SK-N-SH (cell line): ENCODE measurements at regions of chr17 and their contacts with region 1.

Region 1: DNA sequence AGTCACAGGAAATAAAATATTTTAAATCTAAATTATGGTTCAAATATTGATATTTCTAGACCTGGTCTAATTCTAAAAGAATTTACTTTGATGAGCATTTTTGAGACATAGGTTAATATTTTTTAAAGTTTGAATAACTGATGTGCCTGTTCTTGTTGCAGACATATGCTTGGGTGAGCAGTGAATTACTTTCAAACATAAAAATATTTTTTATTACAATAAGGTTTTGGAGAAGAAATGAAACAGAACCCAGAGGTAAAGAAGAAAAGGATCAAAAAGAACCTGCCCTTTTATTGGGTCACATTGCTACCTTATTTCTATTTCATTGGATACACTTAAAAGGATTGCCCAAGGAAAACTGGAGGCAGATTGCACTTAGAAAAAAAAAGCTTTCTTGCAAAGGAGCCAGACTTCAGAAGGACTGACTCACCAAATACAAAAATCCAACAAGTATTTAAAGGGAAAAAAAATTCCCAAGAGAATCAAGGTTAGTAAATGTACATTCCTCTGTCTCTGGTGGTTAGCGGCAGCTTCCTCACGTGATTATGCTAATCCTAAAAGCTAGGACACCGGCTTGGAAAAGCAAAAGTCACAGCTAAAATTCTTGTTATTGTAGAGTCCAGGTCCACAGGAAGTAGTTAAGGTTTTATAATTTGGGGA is 18.5 kb downstream of the ENPP7 start:
- DNase-seq: no peak
- H3K4me3 ChIP-seq: no peak overlapping the region
- H3K27ac ChIP-seq: no peak overlapping the region
- H3K4me1 ChIP-seq: peaks cover 0 to 6% of the 10 kb centered on the region in 2 experiments; a peak in 1 of 4 replicates
- H3K27me3 ChIP-seq: peaks cover 22% of the 10 kb centered on the region
- CTCF ChIP-seq: no peak
- EP300 ChIP-seq: no peak
- RAD21 ChIP-seq: no peak

Region 2: GRCh38 chr17:79760197-79760906 is 11.1 kb after region 1 on chr17:
- CTCF ChIA-PET with region 1: interaction called, 23 read pairs
- POLR2A ChIA-PET with region 1: no interaction called
- DNase-seq: no peak
- H3K4me3 ChIP-seq: no peak overlapping the region
- H3K27ac ChIP-seq: no peak overlapping the region
- H3K4me1 ChIP-seq: no peaks in the 10 kb centered on the region
- H3K27me3 ChIP-seq: peaks cover 3% of the 10 kb centered on the region; the same call in 1 of the 2 replicates
- CTCF ChIP-seq: no peak
- EP300 ChIP-seq: no peak
- RAD21 ChIP-seq: no peak

Region 3: DNA sequence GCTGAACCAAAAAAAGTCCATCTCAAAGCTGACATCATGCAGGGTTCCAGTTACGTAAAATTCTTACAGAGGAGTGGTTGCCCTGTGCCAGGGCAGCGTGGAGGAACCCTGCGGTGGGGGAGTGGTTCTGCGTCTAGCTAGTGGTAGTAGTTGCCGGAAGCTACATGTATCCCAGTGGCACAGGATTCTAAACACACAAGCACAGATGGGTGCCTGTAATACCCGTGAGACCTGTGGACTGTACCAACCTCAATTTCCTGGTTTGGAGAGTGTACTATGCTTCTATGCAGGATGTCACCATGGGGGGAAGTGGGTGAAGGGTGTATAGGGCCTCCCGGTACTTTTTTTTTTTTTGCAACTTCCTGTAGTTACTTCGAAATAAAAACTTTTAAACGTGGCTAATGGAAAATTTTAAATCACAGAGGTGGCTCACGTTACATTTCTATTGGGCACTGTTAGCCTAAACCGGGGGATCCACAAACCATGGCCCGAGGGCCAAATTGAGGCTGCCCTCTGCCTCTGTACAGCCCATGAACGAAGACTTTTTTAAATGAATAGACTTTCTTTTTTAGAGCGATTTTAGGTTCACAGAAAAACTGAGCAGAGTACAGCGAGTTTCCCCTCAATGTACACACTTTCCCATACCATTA is 247.8 kb after region 1 on chr17:
- CTCF ChIA-PET with region 1: interaction called, 36 read pairs
- POLR2A ChIA-PET with region 1: no interaction called
- DNase-seq: no peak
- H3K4me3 ChIP-seq: no peak overlapping the region
- H3K27ac ChIP-seq: no peak overlapping the region
- H3K4me1 ChIP-seq: peaks cover 0 to 6% of the 10 kb centered on the region in 2 experiments; a peak in 1 of 4 replicates
- H3K27me3 ChIP-seq: no peaks in the 10 kb centered on the region
- CTCF ChIP-seq: no peak
- EP300 ChIP-seq: no peak
- RAD21 ChIP-seq: no peak